AG04450 (cell line): ENCODE measurements at regions of chr7 and their contacts with region 1.

Region 1: GRCh38 chr7:46080595-46081159 is 159.6 kb upstream of the IGFBP3 start:
- DNase-seq: no peak
- H3K4me3 ChIP-seq: no peak overlapping the region
- H3K27ac ChIP-seq: no peak overlapping the region
- H3K27me3 ChIP-seq: no peaks in the 10 kb centered on the region
- CTCF ChIP-seq: no peak

Region 2: GRCh38 chr7:46115410-46115809 is 34.7 kb after region 1 on chr7:
- CTCF ChIA-PET with region 1: no interaction called
- POLR2A ChIA-PET with region 1: no interaction called
- DNase-seq: no peak
- H3K4me3 ChIP-seq: no peak overlapping the region
- H3K27ac ChIP-seq: no peak overlapping the region
- H3K27me3 ChIP-seq: no peaks in the 10 kb centered on the region
- CTCF ChIP-seq: no peak

Region 3: GRCh38 chr7:46220066-46220630 is 139.5 kb after region 1 on chr7:
- CTCF ChIA-PET with region 1: interaction called, 10 read pairs
- POLR2A ChIA-PET with region 1: no interaction called
- DNase-seq: no peak
- H3K4me3 ChIP-seq: no peak overlapping the region
- H3K27ac ChIP-seq: no peak overlapping the region
- H3K27me3 ChIP-seq: no peaks in the 10 kb centered on the region
- CTCF ChIP-seq: no peak